ENCODE measurements at regions of chr14 and their contacts with region 1.

Region 1: GRCh38 chr14:73568381-73568781 is 632 bp upstream of the ACOT2 start:
- DNase-seq: no peak

Region 2: DNA sequence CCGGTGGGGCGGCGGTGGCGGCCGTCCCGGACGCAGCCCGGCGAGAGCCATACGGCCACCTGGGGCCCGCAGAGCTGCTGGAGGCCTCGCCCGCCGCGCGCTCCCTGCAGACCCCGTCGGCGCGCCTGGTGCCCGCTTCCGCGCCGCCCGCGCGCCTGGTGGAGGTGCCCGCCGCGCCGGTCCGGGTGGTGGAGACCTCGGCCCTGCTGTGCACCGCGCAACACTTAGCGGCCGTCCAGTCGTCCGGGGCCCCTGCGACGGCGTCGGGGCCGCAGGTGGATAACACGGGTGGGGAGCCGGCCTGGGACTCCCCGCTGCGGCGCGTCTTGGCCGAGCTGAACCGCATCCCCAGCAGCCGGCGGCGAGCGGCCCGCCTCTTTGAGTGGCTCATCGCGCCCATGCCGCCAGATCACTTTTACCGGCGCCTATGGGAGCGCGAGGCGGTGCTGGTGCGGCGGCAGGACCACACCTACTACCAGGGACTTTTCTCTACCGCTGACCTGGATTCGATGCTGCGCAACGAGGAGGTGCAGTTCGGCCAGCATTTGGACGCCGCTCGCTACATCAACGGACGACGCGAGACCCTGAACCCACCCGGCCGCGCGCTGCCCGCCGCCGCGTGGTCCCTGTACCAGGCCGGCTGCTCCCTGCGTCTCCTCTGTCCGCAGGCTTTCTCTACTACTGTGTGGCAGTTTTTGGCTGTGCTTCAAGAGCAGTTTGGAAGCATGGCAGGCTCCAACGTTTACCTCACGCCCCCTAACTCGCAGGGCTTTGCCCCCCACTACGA is 76.9 kb before region 1 on chr14:
- intact Hi-C with region 1: loop called (anchors 5 kb)
- DNase-seq: peak; percentile 19 to 95 (median 56)

Region 3: DNA sequence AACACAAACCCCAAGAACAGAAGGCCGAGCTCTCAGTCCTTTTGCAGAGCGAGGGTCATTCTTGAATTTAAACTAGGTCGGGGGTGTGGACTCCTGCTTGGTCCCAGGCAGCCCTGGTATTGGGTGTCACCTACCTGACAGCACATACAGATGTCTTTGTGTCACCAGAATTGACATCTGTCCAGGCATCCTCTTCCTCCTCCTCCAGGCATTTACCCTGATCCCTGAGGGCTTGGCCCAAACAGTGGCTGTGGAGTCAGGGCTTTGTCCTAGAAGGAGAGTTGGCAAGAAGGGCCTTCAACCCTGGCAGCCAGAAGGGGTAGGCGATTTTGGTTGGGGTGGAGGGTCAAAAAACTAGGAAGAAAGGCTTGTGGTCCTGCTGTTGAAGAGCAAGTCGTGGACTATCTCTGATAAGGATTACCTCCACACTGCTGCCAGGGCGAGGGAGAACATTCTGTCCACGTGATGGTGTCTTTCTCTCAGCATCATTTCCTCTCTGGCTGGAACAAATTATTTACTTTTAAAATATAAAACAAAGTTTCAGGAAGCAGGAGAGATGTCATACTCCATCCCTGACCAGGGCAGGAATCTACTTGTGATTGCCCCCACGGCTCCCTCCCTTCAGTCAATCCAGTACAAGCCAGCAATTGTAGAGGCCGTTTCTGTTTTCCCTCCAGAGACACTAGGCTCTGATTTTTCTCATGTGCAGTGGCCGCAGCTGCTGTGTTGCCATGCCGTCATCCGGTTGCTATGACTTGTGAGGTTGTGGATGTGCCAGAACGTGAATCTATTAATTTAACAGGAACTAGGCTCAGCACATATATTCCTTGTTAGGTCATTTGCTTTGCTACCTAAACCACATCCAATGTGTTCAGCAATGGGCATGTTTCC is 221.6 kb after region 1 on chr14:
- intact Hi-C with region 1: no loop called
- DNase-seq: peak in 9 of 10 donors; percentile 48 to 96 (median 73)

Measured in posterior cingulate gyrus (tissue), 11 donors.